ENCODE measurements at regions of chr1 and their contacts with region 1.

Region 1: GRCh38 chr1:26853156-26853555 is 9.8 kb upstream of the SFN start:
- DNase-seq: peak; percentile 82
- ATAC-seq: peak; percentile 72
- H3K4me3 Mint-ChIP-seq: no peak overlapping the region
- H3K27ac Mint-ChIP-seq: no peak overlapping the region
- H3K4me1 Mint-ChIP-seq: no peaks in the 10 kb centered on the region
- H3K27me3 Mint-ChIP-seq: no peaks in the 10 kb centered on the region
- CTCF ChIP-seq: peak; percentile 76

Region 2: DNA sequence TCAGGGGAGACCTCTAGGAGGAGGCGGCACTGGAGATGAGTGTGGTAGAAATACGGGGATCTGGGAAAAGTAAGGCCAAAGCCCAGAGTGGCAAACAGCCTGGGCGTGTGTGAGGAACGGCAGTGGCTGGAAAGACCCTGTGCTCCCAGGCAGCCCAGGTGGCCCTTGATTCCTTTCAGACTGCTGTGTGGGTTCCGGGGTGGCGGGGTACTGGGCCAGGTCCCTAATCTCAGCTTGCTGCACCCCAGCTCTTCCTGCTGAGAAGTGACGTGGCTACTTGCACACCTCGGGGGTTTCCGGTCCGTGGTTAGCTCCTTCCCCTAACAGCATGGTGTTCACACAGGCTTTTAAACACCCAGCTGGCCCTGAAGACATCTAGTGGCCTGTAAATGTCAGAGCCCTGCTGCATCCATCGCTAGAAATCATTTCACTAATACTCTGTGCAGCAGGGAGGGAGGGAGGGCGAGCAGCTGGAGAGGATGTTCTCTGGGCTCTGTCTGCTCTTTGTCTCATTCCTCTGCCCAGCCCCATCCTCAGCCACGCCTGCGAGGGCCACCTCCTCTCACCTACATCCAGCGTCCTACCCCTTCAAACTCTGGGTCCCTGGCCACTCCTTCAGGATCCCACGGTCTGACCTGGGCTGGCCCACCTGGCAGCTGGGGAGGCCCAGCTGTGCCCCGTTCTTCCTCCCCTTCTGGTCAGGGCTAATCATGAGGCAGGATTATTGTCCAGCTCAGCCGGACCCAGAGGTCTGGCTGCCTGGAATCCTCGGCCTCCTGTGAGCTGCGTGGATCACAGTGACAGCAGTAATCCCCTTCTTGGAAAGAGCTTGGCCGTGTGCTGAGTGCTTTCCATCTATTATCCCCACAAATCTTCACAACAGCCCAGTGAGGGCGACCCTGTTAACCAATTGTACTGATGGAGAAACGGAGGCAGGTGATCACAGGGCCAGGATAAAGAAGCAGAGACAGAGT is 19.4 kb before region 1 on chr1:
- CTCF ChIA-PET with region 1: interaction called, 5 read pairs
- POLR2A ChIA-PET with region 1: interaction called, 17 read pairs
- intact Hi-C with region 1: no loop called
- DNase-seq: peak; percentile 95
- ATAC-seq: peak; percentile 94
- H3K4me3 Mint-ChIP-seq: peak overlapping the region; percentile 62
- H3K27ac Mint-ChIP-seq: peak overlapping the region; percentile 98
- H3K4me1 Mint-ChIP-seq: peaks cover 67% of the 10 kb centered on the region
- H3K27me3 Mint-ChIP-seq: no peaks in the 10 kb centered on the region
- CTCF ChIP-seq: no peak

Region 3: GRCh38 chr1:26983863-26984262 is 130.7 kb after region 1 on chr1:
- CTCF ChIA-PET with region 1: no interaction called
- POLR2A ChIA-PET with region 1: no interaction called
- intact Hi-C with region 1: no loop called
- DNase-seq: no peak
- ATAC-seq: no peak
- H3K4me3 Mint-ChIP-seq: no peak overlapping the region
- H3K27ac Mint-ChIP-seq: no peak overlapping the region
- H3K4me1 Mint-ChIP-seq: peaks cover 3% of the 10 kb centered on the region
- H3K27me3 Mint-ChIP-seq: peaks cover 24% of the 10 kb centered on the region
- CTCF ChIP-seq: no peak

Measured in activated CD8-positive, alpha-beta T cell treated with anti-CD3 and anti-CD28 coated beads for 36 hours (primary cell).